ENCODE measurements at regions of chr18 and their contacts with region 1.

Region 1: GRCh38 chr18:12657684-12658425 is at the start of gene SPIRE1:
- DNase-seq: peak; percentile 34
- H3K4me3 Mint-ChIP-seq: peak within 1 kb of the TSS; percentile 85
- H3K27ac Mint-ChIP-seq: peak within 1 kb of the TSS; percentile 63
- H3K4me1 Mint-ChIP-seq: peaks cover 27% of the 10 kb centered on the region
- H3K27me3 Mint-ChIP-seq: peaks cover 6% of the 10 kb centered on the region
- total RNA-seq, gene SPIRE1: 16.5 and 19.0 TPM in 2 replicates

Region 2: GRCh38 chr18:12271376-12272235 is 386.2 kb before region 1 on chr18:
- intact Hi-C with region 1: loop called (anchors 5 kb)
- DNase-seq: peak; percentile 48
- H3K4me3 Mint-ChIP-seq: peak overlapping the region; percentile 65
- H3K27ac Mint-ChIP-seq: no peak overlapping the region
- H3K4me1 Mint-ChIP-seq: peaks cover 2% of the 10 kb centered on the region
- H3K27me3 Mint-ChIP-seq: peaks cover 4% of the 10 kb centered on the region

Region 3: DNA sequence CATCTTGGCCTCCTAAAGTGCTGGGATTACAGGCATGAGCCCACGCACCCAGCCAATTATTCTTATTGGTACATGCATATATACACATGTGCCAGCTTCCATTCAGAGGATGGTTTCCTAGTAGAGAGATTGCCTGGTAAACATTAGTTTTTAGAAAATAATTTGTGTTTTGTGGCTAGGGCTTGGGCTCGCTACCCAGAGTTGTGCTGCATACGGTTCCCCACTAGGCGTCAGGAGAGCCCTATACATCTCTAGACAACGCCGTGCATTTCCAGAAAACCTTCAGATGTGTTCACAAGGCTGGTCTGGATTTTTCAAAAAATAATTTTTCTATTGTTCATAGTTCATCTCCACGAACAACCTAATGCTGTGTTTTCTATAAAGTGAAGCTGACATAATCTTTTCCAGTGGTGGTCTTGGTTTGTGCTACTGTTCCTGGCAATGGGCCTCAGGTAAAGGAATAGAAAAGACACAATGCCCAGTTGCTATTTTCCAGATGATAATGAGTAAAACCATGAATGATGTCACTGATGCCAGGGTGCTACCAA is 266.2 kb before region 1 on chr18:
- intact Hi-C with region 1: loop called (anchors 1 kb)
- DNase-seq: no peak
- H3K4me3 Mint-ChIP-seq: no peak overlapping the region
- H3K27ac Mint-ChIP-seq: no peak overlapping the region
- H3K4me1 Mint-ChIP-seq: no peaks in the 10 kb centered on the region
- H3K27me3 Mint-ChIP-seq: peaks cover 9% of the 10 kb centered on the region

Region 4: DNA sequence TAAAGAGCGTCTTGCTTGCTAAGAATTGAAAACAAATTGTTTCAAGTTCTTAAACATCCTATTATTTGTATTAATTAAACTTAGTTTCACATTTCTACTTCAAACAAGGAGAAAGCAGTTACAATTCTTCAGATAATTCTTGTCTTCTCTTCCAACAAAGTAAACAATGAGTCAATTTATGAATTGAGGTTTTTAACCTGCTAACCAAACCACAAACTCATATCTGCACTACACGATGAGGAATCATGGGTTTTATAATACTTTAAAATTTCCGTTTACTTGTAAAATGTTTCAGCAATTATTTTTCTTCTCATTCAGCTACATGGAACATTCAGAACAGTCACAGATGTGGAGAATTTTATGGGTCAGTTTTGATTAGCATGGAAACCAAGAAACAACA is 114.2 kb before region 1 on chr18:
- intact Hi-C with region 1: loop called (anchors 1 kb)
- DNase-seq: no peak
- H3K4me3 Mint-ChIP-seq: no peak overlapping the region
- H3K27ac Mint-ChIP-seq: no peak overlapping the region
- H3K4me1 Mint-ChIP-seq: peaks cover 13% of the 10 kb centered on the region
- H3K27me3 Mint-ChIP-seq: peaks cover 13% of the 10 kb centered on the region

Region 5: DNA sequence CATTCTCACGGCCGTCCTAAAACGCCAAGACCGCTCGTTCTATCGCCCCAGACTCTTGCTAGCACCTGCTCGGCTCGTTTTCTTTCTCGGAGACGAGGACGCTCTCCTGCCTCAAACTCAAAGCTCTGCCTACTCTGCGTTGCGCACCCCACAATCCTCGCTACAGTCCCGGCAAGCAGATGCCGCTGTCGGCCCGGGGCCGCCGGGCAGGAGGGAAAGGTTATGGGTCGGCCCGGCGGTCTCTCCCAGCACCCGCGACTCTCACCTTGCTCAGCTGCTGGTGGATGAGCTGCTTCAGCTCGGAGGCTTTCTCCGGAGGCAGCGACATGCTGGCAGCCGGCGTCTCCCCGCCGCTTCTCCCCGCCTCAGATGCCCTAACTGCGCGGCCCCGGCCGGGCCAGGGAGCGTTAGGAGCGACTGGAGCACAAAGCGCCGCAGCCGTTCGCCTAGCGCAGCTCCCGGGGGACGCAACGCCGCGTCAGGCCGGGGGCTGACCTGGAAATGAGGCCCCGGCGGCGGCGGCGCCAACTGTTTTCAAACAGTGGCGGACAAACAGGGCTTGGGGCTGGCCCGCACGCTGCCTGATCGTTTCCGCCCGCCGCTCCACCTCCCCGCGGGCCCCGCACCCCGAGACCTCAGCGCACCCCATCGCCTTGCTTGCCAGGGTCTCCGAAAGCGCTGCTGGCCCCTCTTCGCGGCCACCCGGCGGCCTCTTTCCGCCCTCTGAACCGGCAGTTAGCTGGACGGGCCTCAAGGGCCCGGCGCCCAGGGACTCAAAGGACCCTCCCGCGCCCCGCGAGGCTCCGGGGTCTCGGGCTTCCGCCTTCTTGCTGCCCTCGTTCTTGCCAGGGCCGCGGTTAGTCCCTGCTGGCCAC is 44.6 kb after region 1 on chr18 and contains the starts of genes CEP76 and PSMG2:
- intact Hi-C with region 1: loop called (anchors 2 kb)
- DNase-seq: peak; percentile 81
- H3K4me3 Mint-ChIP-seq: peak within 1 kb of the TSS; percentile 100
- H3K27ac Mint-ChIP-seq: peak within 1 kb of the TSS; percentile 99
- H3K4me1 Mint-ChIP-seq: peaks cover 31% of the 10 kb centered on the region
- H3K27me3 Mint-ChIP-seq: no peaks in the 10 kb centered on the region
- total RNA-seq, gene CEP76: 14.5 and 17.6 TPM in 2 replicates
- total RNA-seq, gene PSMG2: 105 and 107 TPM in 2 replicates

Measured in activated T-helper 2 cell treated with anti-CD3 and anti-CD28 coated beads, Interferon-gamma antibody, Interleukin-2, Interleukin-4, amounts not matched to agents 10 μg/mL and 5 μg/mL and 100 μg/mL, durations not matched to agents 14 hours and 24 hours and 36 hours (primary cell).